SK-N-SH (cell line): ENCODE measurements at regions of chr5 and their contacts with region 1.

Region 1: GRCh38 chr5:141691867-141692532 is 10.0 kb upstream of the ARAP3 start:
- DNase-seq: peak; percentile 92
- H3K4me3 ChIP-seq: peak overlapping the region; percentile 40 to 54
- H3K27ac ChIP-seq: no peak overlapping the region
- H3K4me1 ChIP-seq: peaks cover 0 to 23% of the 10 kb centered on the region in 2 experiments; a peak in 2 of 4 replicates
- H3K27me3 ChIP-seq: peaks cover 28% of the 10 kb centered on the region
- CTCF ChIP-seq: peak; percentile 91
- EP300 ChIP-seq: no peak
- RAD21 ChIP-seq: peak; percentile 96

Region 2: GRCh38 chr5:141672848-141673813 is 18.9 kb before region 1 on chr5:
- CTCF ChIA-PET with region 1: interaction called, 24 read pairs
- POLR2A ChIA-PET with region 1: no interaction called
- DNase-seq: no peak
- H3K4me3 ChIP-seq: no peak overlapping the region
- H3K27ac ChIP-seq: no peak overlapping the region
- H3K4me1 ChIP-seq: no peaks in the 10 kb centered on the region
- H3K27me3 ChIP-seq: no peaks in the 10 kb centered on the region
- CTCF ChIP-seq: no peak
- EP300 ChIP-seq: no peak
- RAD21 ChIP-seq: no peak

Region 3: DNA sequence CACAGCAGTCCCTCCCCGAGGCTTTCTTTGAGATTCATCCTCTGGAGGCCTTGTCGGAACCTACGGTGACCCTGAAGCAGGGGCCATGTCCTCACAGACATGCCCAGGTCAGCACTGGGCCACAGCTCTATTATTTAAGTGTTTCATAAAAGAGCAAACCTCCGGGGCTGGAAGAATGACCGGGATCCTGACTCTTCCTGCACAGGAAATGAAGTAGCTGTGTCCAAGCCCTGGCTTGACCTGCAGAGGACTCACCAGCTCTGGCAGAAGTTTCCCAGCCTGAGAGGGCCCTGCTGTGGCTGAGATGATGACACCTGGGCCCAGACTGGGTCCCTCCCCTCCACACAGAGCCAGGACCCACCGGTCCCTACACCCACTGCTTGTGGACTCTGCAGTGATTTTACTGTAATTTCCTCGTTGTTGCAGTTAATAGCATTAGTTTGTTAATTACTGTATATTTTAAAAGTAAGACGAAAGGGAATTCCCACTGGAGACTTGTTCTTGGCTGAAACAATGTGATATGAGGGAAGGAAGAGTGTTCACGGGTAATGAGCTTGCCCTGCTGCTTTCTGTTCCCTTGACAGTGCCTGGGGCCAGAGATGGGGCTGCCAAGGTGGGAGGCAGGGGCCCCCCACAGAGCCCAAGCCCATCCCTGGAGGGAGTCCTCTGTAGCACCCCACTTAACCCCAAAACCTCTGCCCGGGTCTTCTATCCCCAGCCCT is 114.0 kb after region 1 on chr5:
- CTCF ChIA-PET with region 1: interaction called, 447 read pairs
- POLR2A ChIA-PET with region 1: no interaction called
- DNase-seq: no peak
- H3K4me3 ChIP-seq: no peak overlapping the region
- H3K27ac ChIP-seq: no peak overlapping the region
- H3K4me1 ChIP-seq: peaks cover 0 to 9% of the 10 kb centered on the region in 2 experiments; a peak in 1 of 4 replicates
- H3K27me3 ChIP-seq: peaks cover 52% of the 10 kb centered on the region
- CTCF ChIP-seq: no peak
- EP300 ChIP-seq: no peak
- RAD21 ChIP-seq: no peak

Region 4: GRCh38 chr5:141889282-141889871 is 197.4 kb after region 1 on chr5:
- CTCF ChIA-PET with region 1: interaction called, 12 read pairs
- POLR2A ChIA-PET with region 1: no interaction called
- DNase-seq: peak; percentile 38
- H3K4me3 ChIP-seq: no peak overlapping the region
- H3K27ac ChIP-seq: no peak overlapping the region
- H3K4me1 ChIP-seq: no peaks in the 10 kb centered on the region
- H3K27me3 ChIP-seq: peaks cover 10% of the 10 kb centered on the region; the same call in 1 of the 2 replicates
- CTCF ChIP-seq: peak; percentile 48
- EP300 ChIP-seq: no peak
- RAD21 ChIP-seq: peak; percentile 69

Region 5: GRCh38 chr5:141923448-141924352 is 231.7 kb after region 1 on chr5 and contains the start of gene DELE1:
- CTCF ChIA-PET with region 1: interaction called, 12 read pairs
- POLR2A ChIA-PET with region 1: interaction called, 4 read pairs
- DNase-seq: peak; percentile 95
- H3K4me3 ChIP-seq: peak within 1 kb of the TSS; percentile 87 to 96
- H3K27ac ChIP-seq: peak within 1 kb of the TSS; percentile 98 to 99
- H3K4me1 ChIP-seq: peaks cover 0 to 8% of the 10 kb centered on the region in 2 experiments; a peak in 2 of 4 replicates
- H3K27me3 ChIP-seq: no peaks in the 10 kb centered on the region
- CTCF ChIP-seq: no peak
- EP300 ChIP-seq: peak in 1 of 2 experiments; percentile 36; a peak in 1 of 4 replicates
- RAD21 ChIP-seq: no peak
- polyA plus RNA-seq, gene DELE1: 60.3 and 78.8 TPM in 2 replicates

Region 6: DNA sequence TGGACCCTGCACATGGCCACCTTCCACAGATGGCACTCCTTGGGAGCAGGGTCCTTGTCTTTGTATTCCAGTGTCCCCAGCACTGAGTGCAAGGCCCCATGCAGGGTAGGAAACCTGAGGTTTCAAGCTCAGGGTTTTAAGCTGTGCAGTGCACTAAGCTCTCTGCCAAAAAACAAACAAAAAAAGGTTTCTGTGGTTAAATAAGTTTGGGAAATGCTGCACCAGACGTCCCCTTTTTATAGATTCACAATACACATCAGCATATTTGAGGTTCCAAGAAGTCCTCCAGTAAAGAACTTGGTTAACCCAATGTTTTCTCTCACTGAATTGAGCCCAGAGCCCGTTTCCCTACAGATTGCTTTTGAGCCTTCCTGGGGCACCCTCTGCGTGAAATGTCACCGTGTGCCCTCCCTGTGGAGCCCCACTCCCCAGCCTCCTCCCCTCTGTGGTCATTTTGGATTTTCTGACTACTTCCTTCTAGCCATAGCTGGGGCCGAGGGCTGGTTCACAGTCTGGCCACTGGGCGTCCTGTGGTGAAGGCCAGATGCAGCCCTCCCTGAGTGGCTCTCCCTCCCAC is 248.8 kb after region 1 on chr5:
- CTCF ChIA-PET with region 1: interaction called, 33 read pairs
- POLR2A ChIA-PET with region 1: interaction called, 3 read pairs
- DNase-seq: no peak
- H3K4me3 ChIP-seq: no peak overlapping the region
- H3K27ac ChIP-seq: peak overlapping the region in 1 of 2 experiments; percentile 20; a peak in 1 of 4 replicates
- H3K4me1 ChIP-seq: peaks cover 0 to 15% of the 10 kb centered on the region in 2 experiments; a peak in 1 of 4 replicates
- H3K27me3 ChIP-seq: no peaks in the 10 kb centered on the region
- CTCF ChIP-seq: no peak; the same call in 1 of the 2 replicates
- EP300 ChIP-seq: no peak
- RAD21 ChIP-seq: no peak